Pancreas (tissue), 10 donors: ENCODE measurements at regions of chr9 and their contacts with region 1.

Region 1: GRCh38 chr9:16611983-16612382 is 258.5 kb downstream of the BNC2 start:
- DNase-seq: no peak
- ATAC-seq: no peak
- H3K4me3 ChIP-seq: no peak overlapping the region
- H3K27ac ChIP-seq: no peak overlapping the region
- H3K4me1 ChIP-seq: no peaks in the 10 kb centered on the region
- H3K27me3 ChIP-seq: no peaks in the 10 kb centered on the region
- CTCF ChIP-seq: no peak

Region 2: GRCh38 chr9:16458696-16459420 is 153.1 kb before region 1 on chr9:
- intact Hi-C with region 1: no loop called
- DNase-seq: no peak
- ATAC-seq: no peak
- H3K4me3 ChIP-seq: no peak overlapping the region
- H3K27ac ChIP-seq: no peak overlapping the region
- H3K4me1 ChIP-seq: no peaks in the 10 kb centered on the region
- H3K27me3 ChIP-seq: no peaks in the 10 kb centered on the region
- CTCF ChIP-seq: no peak

Region 3: GRCh38 chr9:16553869-16554540 is 58.0 kb before region 1 on chr9:
- intact Hi-C with region 1: loop called in 1 of 3 experiments (anchors 10 kb)
- DNase-seq: no peak
- ATAC-seq: no peak
- H3K4me3 ChIP-seq: no peak overlapping the region
- H3K27ac ChIP-seq: no peak overlapping the region
- H3K4me1 ChIP-seq: no peaks in the 10 kb centered on the region
- H3K27me3 ChIP-seq: no peaks in the 10 kb centered on the region
- CTCF ChIP-seq: no peak

Region 4: DNA sequence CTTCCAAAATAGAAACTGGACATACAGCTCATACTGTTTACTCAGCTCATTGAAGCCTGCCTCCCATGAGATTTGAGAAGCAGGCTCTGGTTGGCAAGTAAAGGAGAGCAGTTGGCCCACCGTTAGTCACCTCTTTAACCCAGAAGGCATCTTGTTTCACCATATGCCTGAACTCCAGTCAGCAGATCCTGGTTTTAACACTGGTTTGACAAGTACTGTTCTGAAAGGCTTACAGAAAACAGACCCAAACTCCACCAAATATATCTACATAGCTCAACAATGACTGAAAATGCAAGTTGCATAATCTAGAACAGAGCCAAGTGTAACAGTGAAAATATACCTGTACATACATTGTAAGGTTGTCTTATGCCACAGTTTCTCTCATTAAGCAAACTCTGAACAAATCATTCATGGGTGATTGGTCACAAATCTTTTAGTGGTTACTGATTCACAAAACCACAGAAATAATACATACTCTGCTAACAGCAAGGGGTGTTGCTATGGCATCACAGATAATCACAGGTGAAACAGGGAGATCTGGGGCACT is 59.7 kb after region 1 on chr9:
- intact Hi-C with region 1: no loop called
- DNase-seq: no peak
- ATAC-seq: no peak
- H3K4me3 ChIP-seq: no peak overlapping the region
- H3K27ac ChIP-seq: no peak overlapping the region
- H3K4me1 ChIP-seq: no peaks in the 10 kb centered on the region
- H3K27me3 ChIP-seq: no peaks in the 10 kb centered on the region
- CTCF ChIP-seq: no peak